GM13977 (cell line): ENCODE measurements at regions of chr11 and their contacts with region 1.

Region 1: GRCh38 chr11:4636962-4637661 is at the start of gene OR51D1:
- DNase-seq: peak; percentile 59
- CTCF ChIP-seq: peak; percentile 96

Region 2: GRCh38 chr11:4375431-4376140 is 261.5 kb before region 1 on chr11:
- in situ Hi-C with region 1: no loop called
- DNase-seq: no peak
- CTCF ChIP-seq: no peak

Region 3: DNA sequence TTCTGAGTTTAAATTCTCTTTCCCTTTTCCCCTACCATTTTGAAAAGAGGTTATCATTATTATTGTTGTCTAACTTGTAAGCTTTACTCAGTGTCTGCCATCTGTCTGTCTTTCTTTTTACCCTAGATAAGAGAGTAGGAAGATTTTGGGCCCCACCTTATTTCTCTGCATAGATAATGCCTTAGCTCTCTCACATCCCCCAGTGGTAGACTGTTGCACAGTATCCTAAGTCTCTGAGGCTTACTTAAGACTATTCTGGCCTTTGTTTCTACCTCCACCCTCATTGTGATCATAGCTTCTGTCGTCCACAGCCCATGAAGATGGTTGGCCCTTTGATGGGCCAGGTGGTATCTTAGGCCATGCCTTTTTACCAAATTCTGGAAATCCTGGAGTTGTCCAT is 353.9 kb after region 1 on chr11:
- in situ Hi-C with region 1: loop called (anchors 25 kb)
- DNase-seq: no peak
- CTCF ChIP-seq: peak; percentile 26